ENCODE measurements at regions of chr20 and their contacts with region 1.

Region 1: GRCh38 chr20:50819349-50819748 is 24.5 kb downstream of the BCAS4 start:
- DNase-seq: no peak
- ATAC-seq: no peak
- H3K4me3 ChIP-seq: no peak overlapping the region
- H3K27ac ChIP-seq: peak overlapping the region; percentile 49; the same call in 1 of the 2 replicates
- H3K4me1 ChIP-seq: peaks cover 16% of the 10 kb centered on the region in 2 experiments; a peak in 3 of 4 replicates
- H3K27me3 ChIP-seq: no peaks in the 10 kb centered on the region
- CTCF ChIP-seq: no peak
- POLR2A ChIP-seq: no peak
- RAD21 ChIP-seq: no peak

Region 2: GRCh38 chr20:50929299-50930138 is 110.2 kb after region 1 on chr20:
- CTCF ChIA-PET with region 1: interaction called, 11 read pairs
- POLR2A ChIA-PET with region 1: interaction called, 8 read pairs
- RAD21 ChIA-PET with region 1: interaction called, 3 read pairs
- intact Hi-C with region 1: loop called (anchors 1 kb)
- DNase-seq: peak; percentile 96
- ATAC-seq: peak; percentile 74
- H3K4me3 ChIP-seq: peak overlapping the region; percentile 63 to 75
- H3K27ac ChIP-seq: peak overlapping the region; percentile 85
- H3K4me1 ChIP-seq: peaks cover 4 to 27% of the 10 kb centered on the region in 2 experiments; a peak in 3 of 4 replicates
- H3K27me3 ChIP-seq: no peaks in the 10 kb centered on the region
- CTCF ChIP-seq: peak; percentile 97 to 99 (median 99)
- POLR2A ChIP-seq: no peak
- RAD21 ChIP-seq: peak; percentile 76

Measured in HCT116 (cell line).